Panc1 (cell line): ENCODE measurements at regions of chr11 and their contacts with region 1.

Region 1: GRCh38 chr11:61971248-61972111 is 4.0 kb upstream of the FTH1 start:
- DNase-seq: peak; percentile 91
- ATAC-seq: peak; percentile 75
- H3K4me3 ChIP-seq: 0 out of 4 replicates have a peak overlapping the region, but pooled peaks of 1 of the 2 experiments have one; percentile 10
- H3K27ac ChIP-seq: peak overlapping the region; percentile 85
- H3K4me1 ChIP-seq: peaks cover 54% of the 10 kb centered on the region
- H3K27me3 ChIP-seq: no peaks in the 10 kb centered on the region
- CTCF ChIP-seq: no peak

Region 2: DNA sequence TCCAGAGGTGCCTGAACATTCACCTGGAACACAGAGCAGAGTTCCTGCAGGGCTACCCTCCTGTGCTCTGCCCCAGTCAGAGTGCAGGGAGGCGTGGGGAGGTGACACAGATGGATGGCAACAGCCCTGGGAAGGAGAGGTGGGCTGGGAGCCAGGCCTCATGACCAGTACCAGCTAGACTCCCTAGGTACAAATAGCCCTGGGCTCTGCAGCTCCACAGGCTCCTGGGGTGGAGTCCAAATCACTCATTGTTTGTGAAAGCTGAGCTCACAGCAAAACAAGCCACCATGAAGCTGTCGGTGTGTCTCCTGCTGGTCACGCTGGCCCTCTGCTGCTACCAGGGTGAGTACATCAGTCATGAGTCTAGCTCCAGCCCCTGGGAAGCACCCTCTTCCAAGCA is 270.5 kb after region 1 on chr11 and contains the start of gene SCGB1D2:
- CTCF ChIA-PET with region 1: no interaction called
- POLR2A ChIA-PET with region 1: interaction called, 13 read pairs
- in situ Hi-C with region 1: no loop called
- intact Hi-C with region 1: no loop called
- DNase-seq: peak; percentile 74
- ATAC-seq: peak; percentile 95
- H3K4me3 ChIP-seq: no peak within 1 kb of the TSS
- H3K27ac ChIP-seq: peak within 1 kb of the TSS; percentile 55
- H3K4me1 ChIP-seq: peaks cover 11% of the 10 kb centered on the region
- H3K27me3 ChIP-seq: no peaks in the 10 kb centered on the region
- CTCF ChIP-seq: no peak
- total RNA-seq, gene SCGB1D2: 0.85 TPM

Region 3: DNA sequence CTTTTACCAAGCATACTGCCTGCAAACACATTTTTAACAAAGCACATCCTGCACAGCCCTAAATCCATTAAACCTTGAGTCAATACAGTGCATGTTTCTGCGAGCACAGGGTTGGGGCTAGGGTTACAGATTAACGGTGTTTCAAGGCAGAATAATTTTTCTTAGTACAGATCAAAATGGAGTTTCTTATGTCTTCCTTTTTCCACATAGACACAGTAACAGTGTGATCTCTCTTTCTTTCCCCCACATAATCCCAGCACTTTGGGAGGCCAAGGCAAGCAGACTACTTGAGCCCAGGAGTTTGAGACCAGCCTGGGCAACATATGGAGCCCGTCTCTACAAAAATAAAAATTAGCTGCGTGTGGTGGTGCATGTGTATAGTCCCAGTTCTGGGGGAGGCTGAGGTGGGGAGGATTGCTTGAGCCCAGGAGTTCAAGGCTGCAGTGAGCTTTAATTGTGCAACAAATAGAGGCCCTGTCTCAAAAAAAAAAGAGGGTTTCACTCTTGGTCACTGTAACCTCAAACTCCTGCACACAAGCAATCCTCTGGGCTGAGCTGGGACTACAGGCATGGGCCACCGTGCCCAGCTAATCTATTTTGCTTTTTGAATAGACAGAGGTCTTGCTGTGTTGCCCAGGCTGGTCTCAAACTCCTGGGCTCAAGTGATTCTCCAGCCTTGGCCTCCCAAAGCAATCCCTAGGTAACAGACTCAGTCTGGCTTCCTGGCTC is 889.5 kb after region 1 on chr11:
- CTCF ChIA-PET with region 1: no interaction called
- POLR2A ChIA-PET with region 1: interaction called, 11 read pairs
- in situ Hi-C with region 1: no loop called
- intact Hi-C with region 1: no loop called
- DNase-seq: no peak
- ATAC-seq: no peak
- H3K4me3 ChIP-seq: no peak overlapping the region
- H3K27ac ChIP-seq: no peak overlapping the region
- H3K4me1 ChIP-seq: peaks cover 17% of the 10 kb centered on the region
- H3K27me3 ChIP-seq: no peaks in the 10 kb centered on the region
- CTCF ChIP-seq: no peak